AG04450 (cell line): ENCODE measurements at regions of chr6 and their contacts with region 1.

Region 1: GRCh38 chr6:69784595-69785377 is 12.0 kb downstream of the LMBRD1 start:
- DNase-seq: no peak
- H3K4me3 ChIP-seq: no peak overlapping the region
- H3K27ac ChIP-seq: no peak overlapping the region
- H3K27me3 ChIP-seq: no peaks in the 10 kb centered on the region
- CTCF ChIP-seq: no peak

Region 2: DNA sequence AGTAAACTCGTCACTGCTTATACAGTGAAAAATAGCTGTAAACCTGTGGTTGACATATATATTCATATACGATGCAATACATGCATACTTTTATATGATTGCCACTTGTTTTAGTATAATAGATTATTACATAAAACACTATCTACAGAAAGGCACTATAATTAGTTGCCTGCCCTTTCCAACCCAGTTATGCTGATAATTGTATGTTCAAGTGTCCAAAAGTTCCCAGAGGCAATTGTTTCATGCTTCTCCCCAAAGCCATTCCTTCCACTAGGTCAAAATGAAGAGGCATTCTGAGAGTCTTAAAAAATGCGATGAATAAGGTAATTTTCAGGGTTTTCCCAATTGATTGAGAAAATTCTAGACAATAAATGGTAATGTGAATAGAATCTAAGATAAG is 422.6 kb before region 1 on chr6:
- CTCF ChIA-PET with region 1: no interaction called
- POLR2A ChIA-PET with region 1: no interaction called
- DNase-seq: no peak
- H3K4me3 ChIP-seq: no peak overlapping the region
- H3K27ac ChIP-seq: no peak overlapping the region
- H3K27me3 ChIP-seq: no peaks in the 10 kb centered on the region
- CTCF ChIP-seq: no peak

Region 3: GRCh38 chr6:69758214-69758613 is 26.6 kb before region 1 on chr6:
- CTCF ChIA-PET with region 1: no interaction called
- POLR2A ChIA-PET with region 1: no interaction called
- DNase-seq: no peak
- H3K4me3 ChIP-seq: no peak overlapping the region
- H3K27ac ChIP-seq: no peak overlapping the region
- H3K27me3 ChIP-seq: no peaks in the 10 kb centered on the region
- CTCF ChIP-seq: no peak

Region 4: DNA sequence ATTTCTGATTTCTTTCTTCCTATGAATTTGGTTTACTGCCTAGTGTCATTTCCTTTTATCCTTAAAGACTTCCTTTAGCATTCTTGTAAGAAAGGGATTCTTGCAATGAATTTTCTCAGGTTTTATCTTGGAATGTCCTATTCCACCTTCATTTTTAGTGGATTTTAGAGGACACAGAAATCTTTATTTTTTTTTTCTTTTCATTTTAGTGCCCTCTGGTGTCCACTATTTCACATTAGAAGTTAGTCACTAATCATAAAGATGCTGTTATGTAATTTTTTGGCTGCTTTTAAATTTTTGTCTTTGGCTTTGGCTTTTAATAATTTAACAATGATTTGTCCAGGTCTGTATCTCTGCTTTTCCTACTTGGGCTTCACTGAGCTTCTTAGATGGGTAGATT is 16.1 kb before region 1 on chr6:
- CTCF ChIA-PET with region 1: interaction called, 12 read pairs
- POLR2A ChIA-PET with region 1: no interaction called
- DNase-seq: no peak
- H3K4me3 ChIP-seq: no peak overlapping the region
- H3K27ac ChIP-seq: no peak overlapping the region
- H3K27me3 ChIP-seq: no peaks in the 10 kb centered on the region
- CTCF ChIP-seq: peak; percentile 43